Activated naive CD4-positive, alpha-beta T cell treated with anti-CD3 and anti-CD28 coated beads, Interleukin-2, amount 10 ng/mL, durations not matched to agents 7 days and 5 days (primary cell): ENCODE measurements at regions of chr9 and their contacts with region 1.

Region 1: GRCh38 chr9:6827439-6827838 is 69.7 kb downstream of the KDM4C start:
- DNase-seq: peak; percentile 44
- H3K4me3 Mint-ChIP-seq: no peak overlapping the region
- H3K27ac Mint-ChIP-seq: peak overlapping the region; percentile 2
- H3K4me1 Mint-ChIP-seq: no peaks in the 10 kb centered on the region
- H3K27me3 Mint-ChIP-seq: no peaks in the 10 kb centered on the region

Region 2: DNA sequence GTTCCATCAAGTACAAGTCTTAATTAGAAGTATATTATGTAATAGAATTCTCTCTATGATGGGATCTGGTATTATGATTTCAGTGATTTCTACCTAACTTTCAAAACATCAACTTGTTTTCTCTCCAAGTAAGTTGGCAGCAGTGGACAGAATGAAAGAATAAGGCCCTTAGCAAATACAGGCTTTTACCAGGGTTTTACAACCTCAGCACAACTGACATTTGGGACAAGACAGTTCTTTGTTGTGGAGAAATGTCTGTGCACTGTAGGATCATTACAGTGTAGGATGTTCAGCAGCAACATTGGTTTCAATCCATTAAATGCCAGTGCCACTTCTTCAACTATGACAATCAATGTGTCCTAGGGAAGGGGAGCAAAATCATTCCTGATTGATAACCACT is 887.9 kb before region 1 on chr9:
- CTCF ChIA-PET with region 1: no interaction called
- DNase-seq: no peak
- H3K4me3 Mint-ChIP-seq: no peak overlapping the region
- H3K27ac Mint-ChIP-seq: no peak overlapping the region
- H3K4me1 Mint-ChIP-seq: no peaks in the 10 kb centered on the region
- H3K27me3 Mint-ChIP-seq: no peaks in the 10 kb centered on the region

Region 3: DNA sequence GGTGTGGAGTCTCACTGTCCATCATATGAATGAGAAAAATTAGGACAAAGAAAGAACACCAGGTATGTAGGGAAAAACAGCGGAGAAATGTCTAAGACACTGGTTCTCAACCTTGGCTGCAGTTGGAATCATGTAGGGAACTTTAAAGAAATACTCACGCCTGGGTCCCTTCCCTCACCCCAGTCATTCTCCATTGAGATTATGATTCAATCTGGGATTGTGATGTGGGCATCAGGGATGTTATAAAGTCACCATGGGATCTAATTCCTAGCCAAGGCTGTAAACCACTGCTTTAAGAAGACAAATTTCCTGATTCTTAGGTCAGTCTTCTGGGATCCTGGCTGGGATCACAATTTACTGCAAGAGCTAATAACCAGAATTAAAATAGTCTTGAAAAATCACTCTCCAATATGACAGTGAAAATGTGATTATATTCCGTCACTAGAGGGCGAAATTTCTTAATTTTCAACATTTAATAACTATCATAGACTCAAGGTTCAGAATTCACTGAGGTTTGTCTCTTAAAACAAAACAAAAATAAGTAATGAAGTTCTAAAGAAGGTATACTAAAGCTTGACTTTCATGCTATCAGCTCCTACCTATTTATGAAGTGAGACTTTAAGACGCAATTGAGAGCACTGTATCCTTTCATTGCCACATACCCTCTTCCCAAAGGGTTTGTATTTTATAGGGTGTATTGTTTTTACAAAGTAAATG is 242.4 kb before region 1 on chr9:
- CTCF ChIA-PET with region 1: no interaction called
- DNase-seq: no peak
- H3K4me3 Mint-ChIP-seq: no peak overlapping the region
- H3K27ac Mint-ChIP-seq: no peak overlapping the region
- H3K4me1 Mint-ChIP-seq: no peaks in the 10 kb centered on the region
- H3K27me3 Mint-ChIP-seq: peaks cover 7% of the 10 kb centered on the region

Region 4: DNA sequence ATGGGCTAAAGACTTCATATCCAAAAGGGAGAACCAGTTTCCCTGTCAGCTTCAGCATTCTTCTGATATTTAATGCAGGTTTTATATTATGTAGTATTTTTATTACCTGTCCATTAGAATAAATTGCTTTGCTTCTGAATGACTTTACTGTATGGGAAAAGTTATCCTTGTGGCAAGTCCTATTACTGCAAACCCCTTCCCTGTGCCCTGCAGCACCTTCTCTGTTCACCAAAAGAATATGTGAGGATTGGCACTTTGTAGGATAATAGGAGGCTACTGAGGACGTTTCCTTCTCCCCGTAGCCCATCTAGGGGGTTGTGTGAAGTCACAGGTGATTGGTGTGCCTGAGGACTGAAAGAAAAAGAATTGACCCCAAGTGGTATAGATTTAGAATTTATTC is 226.5 kb after region 1 on chr9:
- CTCF ChIA-PET with region 1: interaction called, 23 read pairs
- DNase-seq: no peak
- H3K4me3 Mint-ChIP-seq: no peak overlapping the region
- H3K27ac Mint-ChIP-seq: no peak overlapping the region
- H3K4me1 Mint-ChIP-seq: peaks cover 4% of the 10 kb centered on the region
- H3K27me3 Mint-ChIP-seq: no peaks in the 10 kb centered on the region

Region 5: GRCh38 chr9:7534211-7534935 is 706.9 kb after region 1 on chr9:
- CTCF ChIA-PET with region 1: interaction called, 11 read pairs
- DNase-seq: peak; percentile 24
- H3K4me3 Mint-ChIP-seq: no peak overlapping the region
- H3K27ac Mint-ChIP-seq: peak overlapping the region; percentile 39
- H3K4me1 Mint-ChIP-seq: peaks cover 25% of the 10 kb centered on the region
- H3K27me3 Mint-ChIP-seq: peaks cover 4% of the 10 kb centered on the region